ENCODE measurements at regions of chr1 and their contacts with region 1.

Region 1: GRCh38 chr1:171313835-171314320 is at the start of gene FMO4:
- DNase-seq: peak; percentile 69 to 78
- H3K4me3 ChIP-seq: peak within 1 kb of the TSS in 3 of 4 experiments; percentile 6 to 56 (median 16); a peak in 4 of 8 replicates
- H3K27ac ChIP-seq: no peak within 1 kb of the TSS
- H3K4me1 ChIP-seq: peaks cover 0 to 3% (median 0%) of the 10 kb centered on the region in 4 experiments; a peak in 3 of 7 replicates
- H3K27me3 ChIP-seq: no peaks in the 10 kb centered on the region
- CTCF ChIP-seq: peak in 2 of 3 experiments; percentile 79 to 91; a peak in 3 of 4 replicates
- EP300 ChIP-seq: no peak
- POLR2A ChIP-seq: no peak
- RAD21 ChIP-seq: peak; percentile 89 to 91
- total RNA-seq, gene FMO4: 2.2 and 2.3 TPM in 2 replicates

Region 2: DNA sequence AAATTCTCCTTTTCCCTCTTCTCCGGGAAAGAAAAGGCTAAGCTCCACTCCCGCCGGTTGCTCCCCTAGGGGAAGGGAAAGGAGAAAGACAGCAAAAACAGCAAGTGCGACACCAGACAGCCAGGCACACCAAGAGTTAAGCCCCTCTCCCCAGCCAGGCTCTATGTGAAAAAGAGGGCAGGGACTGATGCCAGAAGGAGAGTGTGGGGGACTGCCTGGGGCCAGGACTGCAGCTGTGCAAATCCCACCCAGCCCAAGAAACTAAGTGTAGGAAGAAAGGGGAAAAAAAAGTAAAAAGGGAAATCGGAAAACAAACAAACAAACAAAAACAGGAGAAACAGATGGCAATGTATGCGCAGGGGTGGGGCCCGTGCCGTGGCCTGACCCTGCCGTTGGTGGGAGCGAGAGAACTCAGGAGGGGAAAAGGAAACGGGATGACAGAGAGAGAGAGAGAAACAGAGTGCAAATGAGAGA is 93.3 kb before region 1 on chr1:
- CTCF ChIA-PET with region 1: interaction called, 47 read pairs
- POLR2A ChIA-PET with region 1: no interaction called
- DNase-seq: peak; percentile 67 to 73
- H3K4me3 ChIP-seq: peak overlapping the region; percentile 17 to 54 (median 30); a peak in 6 of 8 replicates
- H3K27ac ChIP-seq: peak overlapping the region; percentile 70
- H3K4me1 ChIP-seq: peaks cover 2 to 19% (median 14%) of the 10 kb centered on the region in 4 experiments; a peak in 6 of 7 replicates
- H3K27me3 ChIP-seq: no peaks in the 10 kb centered on the region
- CTCF ChIP-seq: no peak; a peak in 1 of 4 replicates
- EP300 ChIP-seq: peak in 1 of 2 experiments; percentile 48; a peak in 1 of 3 replicates
- POLR2A ChIP-seq: peak; percentile 36 to 65; a peak in 2 of 3 replicates
- RAD21 ChIP-seq: peak in 1 of 2 experiments; percentile 24; a peak in 1 of 4 replicates

Region 3: GRCh38 chr1:171251042-171251951 is 62.6 kb before region 1 on chr1:
- CTCF ChIA-PET with region 1: interaction called, 78 read pairs
- POLR2A ChIA-PET with region 1: interaction called, 6 read pairs
- DNase-seq: peak in 1 of 2 experiments; percentile 61
- H3K4me3 ChIP-seq: peak overlapping the region; percentile 19 to 59 (median 56)
- H3K27ac ChIP-seq: no peak overlapping the region
- H3K4me1 ChIP-seq: peaks cover 3 to 12% (median 10%) of the 10 kb centered on the region in 4 experiments
- H3K27me3 ChIP-seq: peaks cover 0 to 2% (median 0%) of the 10 kb centered on the region in 4 experiments; a peak in 3 of 7 replicates
- CTCF ChIP-seq: peak; percentile 20 to 66 (median 59); a peak in 3 of 4 replicates
- EP300 ChIP-seq: no peak
- POLR2A ChIP-seq: no peak
- RAD21 ChIP-seq: peak; percentile 14 to 39; a peak in 2 of 4 replicates

Region 4: GRCh38 chr1:171355727-171356126 is 41.8 kb after region 1 on chr1:
- CTCF ChIA-PET with region 1: interaction called, 17 read pairs
- POLR2A ChIA-PET with region 1: no interaction called
- DNase-seq: no peak
- H3K4me3 ChIP-seq: no peak overlapping the region
- H3K27ac ChIP-seq: no peak overlapping the region
- H3K4me1 ChIP-seq: peaks cover 0 to 5% (median under 1%) of the 10 kb centered on the region in 4 experiments; a peak in 2 of 7 replicates
- H3K27me3 ChIP-seq: no peaks in the 10 kb centered on the region
- CTCF ChIP-seq: no peak
- EP300 ChIP-seq: no peak
- POLR2A ChIP-seq: no peak
- RAD21 ChIP-seq: no peak

Region 5: DNA sequence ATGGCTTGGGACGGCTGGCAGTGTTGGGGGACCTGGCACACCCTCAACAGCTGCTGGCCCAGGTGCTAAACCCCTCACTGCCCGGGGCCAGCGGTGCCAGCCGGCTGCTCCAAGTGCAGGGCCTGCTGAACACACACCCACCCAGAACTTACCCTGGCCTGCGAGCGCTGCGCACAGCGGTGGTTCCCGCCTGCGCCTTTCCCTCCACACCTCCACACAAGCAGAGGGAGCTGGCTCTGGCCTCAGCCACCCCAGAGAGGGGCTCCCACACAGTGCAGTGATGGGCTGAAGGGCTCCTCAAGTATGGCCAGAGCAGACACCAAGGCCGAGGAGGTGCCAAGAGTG is 68.0 kb after region 1 on chr1:
- CTCF ChIA-PET with region 1: no interaction called
- POLR2A ChIA-PET with region 1: no interaction called
- DNase-seq: no peak
- H3K4me3 ChIP-seq: no peak overlapping the region
- H3K27ac ChIP-seq: no peak overlapping the region
- H3K4me1 ChIP-seq: no peaks in the 10 kb centered on the region
- H3K27me3 ChIP-seq: no peaks in the 10 kb centered on the region
- CTCF ChIP-seq: no peak
- EP300 ChIP-seq: no peak
- POLR2A ChIP-seq: no peak
- RAD21 ChIP-seq: no peak